A673 (cell line): ENCODE measurements at regions of chr5 and their contacts with region 1.

Region 1: GRCh38 chr5:178732281-178732680 is 1.8 kb upstream of the ZNF354A start:
- DNase-seq: no peak
- H3K4me3 ChIP-seq: no peak overlapping the region
- H3K27ac ChIP-seq: no peak overlapping the region
- H3K4me1 ChIP-seq: no peaks in the 10 kb centered on the region
- H3K27me3 ChIP-seq: no peaks in the 10 kb centered on the region
- CTCF ChIP-seq: no peak

Region 2: DNA sequence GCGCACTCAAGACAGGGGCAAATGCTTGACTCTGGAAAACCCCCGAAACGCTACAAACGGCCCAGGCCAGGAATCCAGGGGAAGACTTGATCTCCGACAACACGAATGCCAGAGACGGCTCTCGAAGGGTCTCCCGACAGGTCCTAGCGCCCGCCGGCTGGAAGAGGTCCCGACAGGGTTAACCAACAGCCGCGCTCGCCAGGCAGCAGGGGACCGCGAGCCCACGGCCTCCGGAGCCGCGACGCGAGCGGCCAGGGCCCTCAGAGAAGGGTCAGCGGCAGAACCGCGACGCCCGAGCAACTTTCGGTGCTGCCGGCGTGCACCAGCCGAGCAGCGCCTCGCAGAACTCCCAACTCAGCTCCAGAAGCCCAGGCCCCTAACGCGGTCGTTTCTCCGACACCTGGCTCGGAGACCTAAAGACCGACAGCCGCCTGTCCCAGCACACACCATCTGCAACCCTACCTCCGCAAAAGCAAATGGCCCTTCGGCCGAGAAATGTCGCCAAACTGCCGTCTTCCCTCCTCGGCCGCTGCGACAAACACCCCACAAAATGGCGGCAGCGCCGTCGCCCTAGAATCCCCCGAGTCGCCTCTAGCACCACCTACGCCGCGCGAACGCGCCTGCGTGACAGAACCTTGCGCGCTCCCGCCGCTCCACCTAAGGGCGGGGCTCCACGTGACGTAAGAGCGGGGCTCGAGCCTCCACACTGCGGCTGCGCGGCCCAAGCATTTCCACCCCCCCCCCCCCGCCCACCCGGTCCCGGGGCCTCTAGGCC is 105.6 kb before region 1 on chr5 and contains the start of gene CLK4:
- CTCF ChIA-PET with region 1: no interaction called
- POLR2A ChIA-PET with region 1: no interaction called
- intact Hi-C with region 1: loop called (anchors 10 kb)
- DNase-seq: peak; percentile 94
- H3K4me3 ChIP-seq: peak within 1 kb of the TSS; percentile 95
- H3K27ac ChIP-seq: peak within 1 kb of the TSS; percentile 97
- H3K4me1 ChIP-seq: peaks cover 21% of the 10 kb centered on the region
- H3K27me3 ChIP-seq: no peaks in the 10 kb centered on the region
- CTCF ChIP-seq: no peak
- total RNA-seq, gene CLK4: 22.2 and 24.2 TPM in 2 replicates

Region 3: GRCh38 chr5:178683783-178684182 is 48.5 kb before region 1 on chr5:
- CTCF ChIA-PET with region 1: no interaction called
- POLR2A ChIA-PET with region 1: no interaction called
- intact Hi-C with region 1: no loop called
- DNase-seq: no peak
- H3K4me3 ChIP-seq: no peak overlapping the region
- H3K27ac ChIP-seq: no peak overlapping the region
- H3K4me1 ChIP-seq: no peaks in the 10 kb centered on the region
- H3K27me3 ChIP-seq: no peaks in the 10 kb centered on the region
- CTCF ChIP-seq: no peak

Region 4: DNA sequence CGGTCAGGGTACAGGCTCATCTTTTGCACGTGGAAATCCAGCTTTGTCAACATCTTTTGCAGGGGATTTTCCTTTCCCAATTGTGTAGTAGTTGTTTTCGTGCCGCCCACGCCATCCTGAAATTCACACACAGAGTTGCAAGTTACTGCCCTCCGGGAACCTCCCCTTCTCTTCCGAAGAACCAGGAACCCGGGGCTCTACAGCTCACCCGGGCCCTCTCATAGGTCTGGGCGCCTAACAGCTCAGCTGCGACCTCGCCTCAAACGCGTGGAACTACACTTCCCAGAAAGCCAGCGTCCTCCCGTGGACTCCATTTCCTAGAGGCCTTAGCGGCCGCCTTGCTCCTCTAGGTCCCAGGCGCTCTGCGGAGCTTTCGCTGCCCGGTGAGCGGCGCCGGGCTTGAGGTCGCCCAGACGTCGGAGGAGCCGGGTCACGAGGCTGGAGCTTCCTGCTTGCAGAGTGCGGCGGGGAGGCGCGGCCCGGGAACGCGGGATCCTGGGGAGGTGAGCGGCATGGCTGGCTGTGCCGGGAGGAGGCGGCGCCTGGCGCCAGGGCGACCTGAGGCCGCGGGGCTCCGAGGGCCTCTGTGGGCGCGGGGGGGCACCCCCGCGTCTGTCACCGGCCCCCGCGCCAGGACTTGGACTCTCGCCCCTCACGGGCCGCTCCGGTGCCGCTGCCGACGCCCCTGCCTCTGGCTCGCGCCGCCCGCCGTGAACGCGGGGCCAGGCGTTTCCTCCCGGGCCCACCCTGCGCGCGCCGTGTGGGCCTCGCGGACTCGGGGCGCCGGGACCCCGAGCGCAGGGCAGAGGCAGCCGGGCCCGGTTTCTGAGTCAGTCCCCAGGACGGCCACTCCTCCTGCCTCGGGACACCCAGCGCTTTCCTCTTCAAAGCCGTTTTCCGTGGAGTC is 127.6 kb after region 1 on chr5 and contains the start of gene ZNF354B:
- CTCF ChIA-PET with region 1: interaction called, 7 read pairs
- POLR2A ChIA-PET with region 1: no interaction called
- intact Hi-C with region 1: loop called (anchors 1 kb)
- DNase-seq: peak; percentile 94
- H3K4me3 ChIP-seq: peak within 1 kb of the TSS; percentile 85
- H3K27ac ChIP-seq: peak within 1 kb of the TSS; percentile 86
- H3K4me1 ChIP-seq: peaks cover 4% of the 10 kb centered on the region
- H3K27me3 ChIP-seq: no peaks in the 10 kb centered on the region
- CTCF ChIP-seq: no peak
- total RNA-seq, gene ZNF354B: 13.8 TPM in 2 replicates

Region 5: GRCh38 chr5:178866946-178867345 is 134.7 kb after region 1 on chr5:
- CTCF ChIA-PET with region 1: no interaction called
- POLR2A ChIA-PET with region 1: no interaction called
- intact Hi-C with region 1: loop called (anchors 2 kb)
- DNase-seq: no peak
- H3K4me3 ChIP-seq: no peak overlapping the region
- H3K27ac ChIP-seq: no peak overlapping the region
- H3K4me1 ChIP-seq: no peaks in the 10 kb centered on the region
- H3K27me3 ChIP-seq: no peaks in the 10 kb centered on the region
- CTCF ChIP-seq: no peak

Region 6: DNA sequence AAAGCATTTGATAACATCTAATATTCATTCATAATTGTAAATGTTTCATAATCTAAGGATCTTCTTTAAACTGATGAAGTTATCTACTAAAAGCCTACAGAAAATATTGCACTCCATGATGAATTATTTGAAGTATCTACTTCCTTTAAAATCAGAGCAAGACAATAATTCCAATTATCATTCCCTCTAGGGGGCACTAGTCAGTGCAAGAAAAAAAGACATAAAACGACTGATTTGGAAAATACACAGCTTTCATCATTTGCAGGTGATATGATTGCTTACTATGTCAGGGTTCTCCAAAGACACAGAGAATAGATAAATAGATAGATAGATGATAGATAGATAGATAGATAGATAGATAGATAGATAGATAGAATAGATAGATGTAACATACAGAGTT is 276.4 kb after region 1 on chr5:
- CTCF ChIA-PET with region 1: no interaction called
- POLR2A ChIA-PET with region 1: no interaction called
- intact Hi-C with region 1: no loop called
- DNase-seq: no peak
- H3K4me3 ChIP-seq: no peak overlapping the region
- H3K27ac ChIP-seq: no peak overlapping the region
- H3K4me1 ChIP-seq: no peaks in the 10 kb centered on the region
- H3K27me3 ChIP-seq: no peaks in the 10 kb centered on the region
- CTCF ChIP-seq: 0 out of 2 replicates have a peak, but pooled peaks have one; percentile 22

Region 7: GRCh38 chr5:179494774-179495526 is 762.7 kb after region 1 on chr5:
- CTCF ChIA-PET with region 1: interaction called, 4 read pairs
- POLR2A ChIA-PET with region 1: no interaction called
- intact Hi-C with region 1: loop called (anchors 5 kb)
- DNase-seq: no peak
- H3K4me3 ChIP-seq: no peak overlapping the region
- H3K27ac ChIP-seq: no peak overlapping the region
- H3K4me1 ChIP-seq: no peaks in the 10 kb centered on the region
- H3K27me3 ChIP-seq: no peaks in the 10 kb centered on the region
- CTCF ChIP-seq: no peak